ENCODE measurements at regions of chr16 and their contacts with region 1.

Region 1: DNA sequence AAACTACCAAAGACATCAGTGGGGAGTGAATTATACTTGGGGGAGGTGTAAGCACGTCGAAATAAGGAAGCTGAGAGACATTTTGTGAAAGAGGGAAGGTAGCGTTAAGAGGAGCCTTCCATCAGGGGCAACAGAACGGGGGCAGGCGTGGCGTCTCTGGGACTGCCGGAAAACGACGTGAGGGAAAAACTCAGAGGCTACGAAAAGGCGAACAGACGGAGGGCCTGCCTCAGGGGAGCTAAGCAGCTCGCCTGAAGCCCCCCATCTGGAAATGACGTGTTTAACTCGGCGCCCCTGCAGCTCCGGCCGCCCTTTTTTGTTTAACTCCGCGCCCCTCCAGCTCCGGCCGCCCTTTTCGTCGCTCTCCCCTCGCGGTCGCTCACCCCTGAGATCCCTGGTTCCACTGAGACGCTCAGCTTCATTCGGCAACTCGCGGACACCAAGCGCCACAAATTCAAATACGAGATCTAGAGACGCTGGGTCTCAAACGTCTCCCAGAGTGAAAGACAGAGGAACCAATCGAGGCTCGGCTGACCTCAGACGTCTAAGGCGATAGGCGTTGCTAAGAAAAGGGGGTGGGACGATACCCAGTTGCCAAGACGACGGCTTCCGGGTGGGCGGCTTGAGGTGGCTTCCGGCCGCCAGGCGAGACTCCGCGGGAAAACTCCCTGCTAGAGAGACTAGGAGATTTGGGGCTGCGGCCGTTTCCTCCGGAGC is 383.3 kb downstream of the ZFHX3 start:
- DNase-seq: peak; percentile 84 to 98 (median 90)
- ATAC-seq: peak; percentile 99
- H3K4me3 ChIP-seq: peak overlapping the region; percentile 77
- H3K4me3 Mint-ChIP-seq: peak overlapping the region; percentile 98
- H3K27ac ChIP-seq: peak overlapping the region; percentile 54 to 59
- H3K27ac Mint-ChIP-seq: peak overlapping the region; percentile 85
- H3K4me1 ChIP-seq: peaks cover 9% of the 10 kb centered on the region
- H3K4me1 Mint-ChIP-seq: peaks cover 15% of the 10 kb centered on the region
- H3K27me3 ChIP-seq: no peaks in the 10 kb centered on the region
- H3K27me3 Mint-ChIP-seq: no peaks in the 10 kb centered on the region
- CTCF ChIP-seq: no peak

Region 2: DNA sequence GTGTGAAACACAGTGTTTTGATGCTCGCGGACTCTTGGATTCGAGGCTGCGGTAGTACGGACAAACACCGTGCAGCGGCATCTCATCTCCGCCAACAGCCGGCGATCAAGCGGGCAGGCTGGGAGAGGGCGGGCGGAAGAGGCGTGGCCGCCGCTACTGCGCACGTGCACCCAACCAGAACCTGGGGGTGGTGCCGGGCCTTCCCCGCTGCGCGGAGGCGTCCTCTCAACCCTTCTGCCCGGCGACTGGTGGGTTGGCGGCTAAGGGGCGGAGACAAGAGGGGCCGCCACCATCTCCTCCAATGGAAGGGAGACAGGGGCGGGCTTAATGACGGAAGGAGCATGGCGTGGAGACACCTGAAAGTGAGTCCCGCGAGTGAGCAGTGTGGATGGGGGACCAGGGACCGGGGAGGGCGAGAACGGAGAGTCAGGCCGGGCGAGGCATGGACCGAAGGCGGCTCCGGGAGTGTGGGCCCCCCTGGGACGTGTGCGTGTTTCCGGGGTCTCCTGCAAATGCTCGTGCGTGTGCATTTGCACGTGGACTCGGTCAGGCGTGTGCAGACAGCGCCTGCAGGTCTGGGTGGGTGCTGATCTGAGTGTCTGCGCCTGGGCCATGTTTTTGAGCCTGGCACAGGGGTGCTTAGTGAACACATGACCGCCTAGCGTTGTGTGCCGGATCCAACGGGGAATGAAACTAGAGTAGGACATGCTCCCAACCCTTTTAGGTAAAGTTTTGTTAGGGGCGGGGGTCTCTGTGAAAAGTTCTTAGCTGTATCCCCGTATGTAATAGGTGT is 656.0 kb before region 1 on chr16 and contains the start of gene DHODH:
- CTCF ChIA-PET with region 1: no interaction called
- POLR2A ChIA-PET with region 1: no interaction called
- intact Hi-C with region 1: loop called in 1 of 2 experiments (anchors 10 kb)
- DNase-seq: peak; percentile 94 to 99 (median 97)
- ATAC-seq: peak; percentile 99
- H3K4me3 ChIP-seq: peak within 1 kb of the TSS; percentile 99
- H3K4me3 Mint-ChIP-seq: peak within 1 kb of the TSS; percentile 96
- H3K27ac ChIP-seq: peak within 1 kb of the TSS; percentile 29 to 58
- H3K27ac Mint-ChIP-seq: peak within 1 kb of the TSS; percentile 73
- H3K4me1 ChIP-seq: peaks cover 19% of the 10 kb centered on the region
- H3K4me1 Mint-ChIP-seq: peaks cover 12% of the 10 kb centered on the region
- H3K27me3 ChIP-seq: no peaks in the 10 kb centered on the region
- H3K27me3 Mint-ChIP-seq: no peaks in the 10 kb centered on the region
- CTCF ChIP-seq: no peak
- total RNA-seq, gene DHODH: 2.5 to 2.7 TPM

Region 3: GRCh38 chr16:72787514-72788268 is 123.0 kb after region 1 on chr16:
- CTCF ChIA-PET with region 1: no interaction called
- POLR2A ChIA-PET with region 1: interaction called, 3 read pairs
- intact Hi-C with region 1: loop called in 1 of 2 experiments (anchors 10 kb)
- DNase-seq: peak; percentile 37 to 84 (median 50)
- ATAC-seq: peak; percentile 91
- H3K4me3 ChIP-seq: peak overlapping the region; percentile 61
- H3K4me3 Mint-ChIP-seq: peak overlapping the region; percentile 86
- H3K27ac ChIP-seq: no peak overlapping the region
- H3K27ac Mint-ChIP-seq: peak overlapping the region; percentile 60
- H3K4me1 ChIP-seq: peaks cover 13% of the 10 kb centered on the region
- H3K4me1 Mint-ChIP-seq: peaks cover 13% of the 10 kb centered on the region
- H3K27me3 ChIP-seq: peaks cover 5 to 16% of the 10 kb centered on the region in 2 experiments
- H3K27me3 Mint-ChIP-seq: peaks cover 53% of the 10 kb centered on the region
- CTCF ChIP-seq: no peak